Prostate gland (tissue), 2 donors: ENCODE measurements at regions of chr16 and their contacts with region 1.

Region 1: GRCh38 chr16:1308977-1309885 is at the start of gene UBE2I:
- DNase-seq: peak; percentile 96
- H3K4me3 ChIP-seq: peak within 1 kb of the TSS; percentile 68 to 75
- H3K27ac ChIP-seq: peak within 1 kb of the TSS; percentile 95 to 96
- H3K4me1 ChIP-seq: peaks cover 19% of the 10 kb centered on the region
- H3K27me3 ChIP-seq: no peaks in the 10 kb centered on the region
- CTCF ChIP-seq: no peak
- POLR2A ChIP-seq: peak; percentile 49
- total RNA-seq, gene UBE2I: 58.2 to 110 TPM

Region 2: DNA sequence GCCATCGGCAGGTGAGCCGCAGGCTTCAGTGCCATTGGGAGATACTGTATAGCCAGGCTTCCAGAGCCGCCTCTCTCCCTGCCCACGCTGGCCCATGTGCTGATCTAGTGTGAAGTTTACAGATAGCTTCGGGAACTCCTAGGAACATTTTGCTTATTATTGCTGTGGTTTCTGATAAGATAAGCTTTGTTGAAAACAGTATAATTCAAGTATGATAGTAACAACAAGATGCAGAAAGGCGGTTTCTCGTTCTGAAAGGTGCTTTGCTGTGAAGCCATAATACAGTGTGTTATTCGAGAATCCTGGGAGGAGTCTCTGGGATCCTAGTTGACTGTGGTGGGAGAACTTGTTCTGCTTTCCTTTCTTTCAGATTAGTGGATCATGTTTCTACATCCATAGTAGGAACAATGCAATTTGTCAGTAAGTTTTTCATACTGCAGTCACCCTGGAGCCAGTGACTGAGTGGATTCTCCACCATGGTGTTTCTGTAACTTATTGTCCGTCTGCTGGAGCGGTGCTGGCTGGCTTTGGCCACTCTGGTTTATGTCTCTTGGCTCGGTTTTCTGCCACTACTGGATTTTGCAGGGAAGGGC is 852.2 kb before region 1 on chr16:
- intact Hi-C with region 1: no loop called
- DNase-seq: peak; percentile 46
- H3K4me3 ChIP-seq: no peak overlapping the region
- H3K27ac ChIP-seq: peak overlapping the region; percentile 49 to 73
- H3K4me1 ChIP-seq: peaks cover 6% of the 10 kb centered on the region
- H3K27me3 ChIP-seq: no peaks in the 10 kb centered on the region
- CTCF ChIP-seq: no peak
- POLR2A ChIP-seq: no peak

Region 3: GRCh38 chr16:1363501-1364041 is 54.3 kb after region 1 on chr16:
- intact Hi-C with region 1: loop called (anchors 10 kb)
- DNase-seq: peak; percentile 51
- H3K4me3 ChIP-seq: no peak overlapping the region
- H3K27ac ChIP-seq: no peak overlapping the region
- H3K4me1 ChIP-seq: peaks cover 5% of the 10 kb centered on the region
- H3K27me3 ChIP-seq: no peaks in the 10 kb centered on the region
- CTCF ChIP-seq: peak; percentile 35 to 82 (median 62)
- POLR2A ChIP-seq: no peak

Region 4: DNA sequence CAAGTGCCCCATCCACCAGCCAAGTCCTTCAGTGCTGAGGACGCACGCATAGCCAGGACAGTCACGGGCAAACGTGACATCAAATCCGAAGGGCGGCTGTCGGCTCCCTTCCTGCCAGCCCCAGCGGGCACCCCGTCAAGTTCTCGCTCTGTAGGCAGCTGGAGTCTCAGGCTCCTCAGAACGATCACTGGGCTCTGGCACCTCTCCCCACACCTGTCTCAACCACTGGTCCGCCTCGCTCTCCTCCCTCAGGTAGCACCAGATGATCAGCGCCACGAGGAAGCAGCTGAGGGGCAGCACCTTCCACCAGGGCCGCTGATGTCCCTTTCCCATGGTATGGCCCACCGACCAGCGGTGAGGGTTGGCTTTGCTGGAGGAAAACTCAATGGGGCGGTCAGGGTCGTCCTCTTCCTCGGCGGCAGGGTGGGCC is 110.9 kb after region 1 on chr16:
- intact Hi-C with region 1: loop called (anchors 5 kb)
- DNase-seq: no peak
- H3K4me3 ChIP-seq: peak overlapping the region; percentile 94 to 95
- H3K27ac ChIP-seq: peak overlapping the region; percentile 93 to 95
- H3K4me1 ChIP-seq: peaks cover 8% of the 10 kb centered on the region
- H3K27me3 ChIP-seq: no peaks in the 10 kb centered on the region
- CTCF ChIP-seq: no peak
- POLR2A ChIP-seq: no peak